Dendritic cell treated with granulocyte-macrophage colony-stimulating factor and Interleukin-4, amounts not matched to agents 40 ng/mL and 50 ng/mL, for 4 days (primary cell): ENCODE measurements at regions of chr7 and their contacts with region 1.

Region 1: GRCh38 chr7:94395141-94396036 is 694 bp downstream of the COL1A2 start:
- H3K4me3 Mint-ChIP-seq: no peak overlapping the region
- H3K27ac Mint-ChIP-seq: no peak overlapping the region
- H3K4me1 Mint-ChIP-seq: peaks cover 5% of the 10 kb centered on the region
- H3K27me3 Mint-ChIP-seq: peaks cover 26% of the 10 kb centered on the region

Region 2: GRCh38 chr7:93442478-93443224 is 952.7 kb before region 1 on chr7:
- intact Hi-C with region 1: loop called (anchors 10 kb)
- H3K4me3 Mint-ChIP-seq: no peak overlapping the region
- H3K27ac Mint-ChIP-seq: no peak overlapping the region
- H3K4me1 Mint-ChIP-seq: no peaks in the 10 kb centered on the region
- H3K27me3 Mint-ChIP-seq: no peaks in the 10 kb centered on the region

Region 3: GRCh38 chr7:93715234-93715633 is 680.2 kb before region 1 on chr7:
- intact Hi-C with region 1: loop called (anchors 5 kb)
- H3K4me3 Mint-ChIP-seq: no peak overlapping the region
- H3K27ac Mint-ChIP-seq: no peak overlapping the region
- H3K4me1 Mint-ChIP-seq: no peaks in the 10 kb centered on the region
- H3K27me3 Mint-ChIP-seq: peaks cover 5% of the 10 kb centered on the region

Region 4: GRCh38 chr7:93902777-93903423 is 492.5 kb before region 1 on chr7:
- intact Hi-C with region 1: loop called (anchors 1 kb)
- H3K4me3 Mint-ChIP-seq: no peak overlapping the region
- H3K27ac Mint-ChIP-seq: no peak overlapping the region
- H3K4me1 Mint-ChIP-seq: no peaks in the 10 kb centered on the region
- H3K27me3 Mint-ChIP-seq: peaks cover 9% of the 10 kb centered on the region

Region 5: DNA sequence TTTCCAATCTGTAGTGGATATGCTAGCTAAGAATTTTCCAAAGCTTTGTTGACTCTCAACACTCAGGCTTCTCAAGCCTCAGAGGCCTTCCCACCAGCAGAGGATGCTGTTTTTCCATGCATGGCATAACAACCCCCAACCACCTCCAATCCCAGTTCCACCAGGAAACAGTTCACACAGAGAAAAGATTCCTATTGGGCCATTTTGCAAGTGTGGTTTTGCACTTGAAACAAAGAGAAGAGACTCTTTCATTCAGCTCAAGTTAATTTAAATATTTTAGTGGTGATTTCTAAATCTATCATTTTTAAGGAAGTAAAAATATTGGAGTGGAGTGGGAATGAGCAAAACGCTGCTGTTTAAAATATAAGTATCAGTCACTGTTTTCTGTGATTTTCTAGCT is 106.3 kb before region 1 on chr7:
- intact Hi-C with region 1: loop called (anchors 5 kb)
- H3K4me3 Mint-ChIP-seq: no peak overlapping the region
- H3K27ac Mint-ChIP-seq: no peak overlapping the region
- H3K4me1 Mint-ChIP-seq: no peaks in the 10 kb centered on the region
- H3K27me3 Mint-ChIP-seq: peaks cover 3% of the 10 kb centered on the region

Region 6: GRCh38 chr7:94503097-94503496 is 107.7 kb after region 1 on chr7:
- intact Hi-C with region 1: no loop called
- H3K4me3 Mint-ChIP-seq: no peak overlapping the region
- H3K27ac Mint-ChIP-seq: no peak overlapping the region
- H3K4me1 Mint-ChIP-seq: no peaks in the 10 kb centered on the region
- H3K27me3 Mint-ChIP-seq: peaks cover 2% of the 10 kb centered on the region